ENCODE measurements at regions of chr7 and their contacts with region 1.

Region 1: GRCh38 chr7:106542550-106543220 is 118.3 kb downstream of the CCDC71L start:
- DNase-seq: peak; percentile 57 to 68
- H3K4me3 ChIP-seq: no peak overlapping the region
- H3K4me3 Mint-ChIP-seq: no peak overlapping the region
- H3K27ac Mint-ChIP-seq: no peak overlapping the region
- H3K4me1 ChIP-seq: no peaks in the 10 kb centered on the region
- H3K4me1 Mint-ChIP-seq: peaks cover 7% of the 10 kb centered on the region
- H3K27me3 ChIP-seq: no peaks in the 10 kb centered on the region; the same call in 1 of the 2 replicates
- H3K27me3 Mint-ChIP-seq: peaks cover 4% of the 10 kb centered on the region
- CTCF ChIP-seq: peak; percentile 68 to 76

Region 2: GRCh38 chr7:106736508-106737201 is 194.0 kb after region 1 on chr7:
- CTCF ChIA-PET with region 1: interaction called, 37 read pairs
- POLR2A ChIA-PET with region 1: no interaction called
- intact Hi-C with region 1: loop called (anchors 1 kb)
- DNase-seq: peak; percentile 52 to 59
- H3K4me3 ChIP-seq: no peak overlapping the region
- H3K4me3 Mint-ChIP-seq: no peak overlapping the region
- H3K27ac Mint-ChIP-seq: no peak overlapping the region
- H3K4me1 ChIP-seq: 0 out of 2 replicates have a peak, but pooled peaks cover 5% of the 10 kb centered on the region
- H3K4me1 Mint-ChIP-seq: no peaks in the 10 kb centered on the region
- H3K27me3 ChIP-seq: no peaks in the 10 kb centered on the region
- H3K27me3 Mint-ChIP-seq: no peaks in the 10 kb centered on the region
- CTCF ChIP-seq: peak; percentile 63 to 71

Region 3: DNA sequence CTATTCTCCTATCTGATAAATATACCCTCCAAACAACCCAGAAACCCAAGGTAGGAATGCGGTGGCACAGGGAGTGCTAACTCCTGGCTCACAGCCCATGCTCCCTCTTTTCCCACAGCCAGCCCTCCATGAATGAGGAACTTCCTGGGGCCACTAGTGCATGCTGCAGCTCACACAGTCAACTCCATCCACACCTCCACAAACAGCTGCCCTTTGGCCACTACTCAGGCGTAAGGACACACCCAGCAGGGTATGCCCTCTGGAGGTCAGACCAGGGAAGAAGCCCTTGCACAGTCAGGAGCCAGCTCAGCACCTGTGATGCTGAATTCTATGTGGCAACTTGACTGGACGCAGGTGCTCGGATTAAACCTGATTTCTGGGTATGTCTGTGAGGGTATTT is 237.2 kb after region 1 on chr7:
- CTCF ChIA-PET with region 1: interaction called, 20 read pairs
- POLR2A ChIA-PET with region 1: no interaction called
- intact Hi-C with region 1: loop called (anchors 1 kb)
- DNase-seq: peak; percentile 71 to 82
- H3K4me3 ChIP-seq: no peak overlapping the region
- H3K4me3 Mint-ChIP-seq: no peak overlapping the region
- H3K27ac Mint-ChIP-seq: no peak overlapping the region
- H3K4me1 ChIP-seq: peaks cover 4% of the 10 kb centered on the region; the same call in 1 of the 2 replicates
- H3K4me1 Mint-ChIP-seq: peaks cover 14% of the 10 kb centered on the region
- H3K27me3 ChIP-seq: no peaks in the 10 kb centered on the region
- H3K27me3 Mint-ChIP-seq: no peaks in the 10 kb centered on the region
- CTCF ChIP-seq: peak; percentile 40 to 77